HEK293 (cell line): ENCODE measurements at regions of chr17 and their contacts with region 1.

Region 1: DNA sequence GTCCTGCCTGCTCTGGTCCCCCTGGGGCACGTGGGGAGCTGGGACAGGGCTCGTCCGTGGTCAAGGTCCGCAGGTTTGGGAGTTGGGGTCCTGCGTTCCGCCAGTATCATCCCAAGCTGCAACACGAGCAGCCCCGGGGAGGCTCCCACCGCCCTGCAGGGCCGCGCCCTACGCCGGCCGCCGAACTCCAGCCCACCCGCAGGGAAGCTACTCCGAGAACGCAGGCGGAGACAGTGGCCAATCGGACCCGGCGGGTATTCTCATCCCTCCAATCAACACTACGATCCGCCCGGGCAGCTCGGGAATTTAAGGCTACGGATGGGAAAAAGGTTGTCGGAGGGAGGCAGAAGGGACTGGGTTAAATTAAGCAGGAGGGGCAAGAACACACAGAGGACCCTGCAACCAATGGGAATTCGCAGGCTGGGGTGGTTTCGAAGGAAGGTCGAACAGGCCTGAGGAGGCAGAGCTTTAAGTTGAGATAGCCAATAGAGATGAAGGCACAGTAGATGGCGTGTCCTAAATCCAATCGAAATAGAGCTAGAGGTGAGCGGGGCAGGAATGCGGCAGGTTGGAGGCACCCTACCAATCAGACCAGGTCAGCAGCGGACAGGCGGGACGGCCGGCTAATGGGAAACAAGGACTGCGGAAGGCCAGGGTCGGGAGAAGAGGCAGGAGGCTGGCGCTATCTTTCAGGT is 626 bp downstream of the SPAG7 start:
- H3K4me3 ChIP-seq: peak overlapping the region; percentile 70
- H3K27ac ChIP-seq: peak overlapping the region; percentile 97
- H3K4me1 ChIP-seq: peaks cover 15% of the 10 kb centered on the region
- CTCF ChIP-seq: no peak

Region 2: DNA sequence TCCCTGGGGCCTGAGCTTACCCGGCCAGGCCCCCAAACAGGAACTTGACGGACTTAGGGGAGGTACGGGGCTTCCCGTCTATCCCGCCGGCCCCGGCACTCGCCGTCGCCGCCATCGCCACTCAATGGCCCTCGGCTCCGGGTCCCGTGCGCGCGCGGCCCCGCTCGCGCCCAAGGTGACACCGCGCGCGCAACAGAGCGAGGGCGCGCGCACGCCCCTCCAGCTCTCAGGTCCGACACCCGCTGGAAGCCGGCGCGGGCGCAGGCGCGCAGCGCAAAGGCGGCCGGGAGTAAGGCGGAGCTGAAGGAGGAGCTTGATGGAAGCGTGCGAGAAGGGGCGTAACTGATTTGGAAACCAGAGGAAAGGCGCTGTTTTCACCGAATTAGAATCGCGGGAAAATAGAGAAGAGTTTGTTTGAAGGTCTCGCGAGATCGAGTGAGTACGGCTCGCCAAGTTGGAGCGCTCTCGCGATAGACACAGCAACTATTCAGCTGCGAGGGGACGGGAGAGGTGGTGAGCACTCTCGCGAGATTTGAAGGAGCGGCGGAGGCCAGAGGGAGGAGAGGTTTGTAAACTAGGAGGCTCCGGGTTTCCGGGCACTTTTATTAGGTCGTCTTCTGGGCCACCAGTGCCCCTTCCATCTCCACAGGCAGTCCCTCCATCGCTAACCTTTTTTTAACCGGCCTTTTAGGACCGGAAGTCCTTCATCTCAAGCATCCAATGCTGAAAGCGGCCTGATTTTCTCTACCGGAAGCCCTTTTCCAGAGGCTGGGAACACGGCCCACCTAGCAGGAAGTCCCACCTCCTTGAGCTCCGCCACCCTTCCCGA is 27.0 kb before region 1 on chr17 and contains the starts of genes RNF167 and SLC25A11:
- CTCF ChIA-PET with region 1: interaction called, 5 read pairs
- POLR2A ChIA-PET with region 1: interaction called, 358 read pairs
- H3K4me3 ChIP-seq: peak within 1 kb of the TSS; percentile 87
- H3K27ac ChIP-seq: peak within 1 kb of the TSS; percentile 93
- H3K4me1 ChIP-seq: peaks cover 9% of the 10 kb centered on the region
- CTCF ChIP-seq: no peak

Region 3: DNA sequence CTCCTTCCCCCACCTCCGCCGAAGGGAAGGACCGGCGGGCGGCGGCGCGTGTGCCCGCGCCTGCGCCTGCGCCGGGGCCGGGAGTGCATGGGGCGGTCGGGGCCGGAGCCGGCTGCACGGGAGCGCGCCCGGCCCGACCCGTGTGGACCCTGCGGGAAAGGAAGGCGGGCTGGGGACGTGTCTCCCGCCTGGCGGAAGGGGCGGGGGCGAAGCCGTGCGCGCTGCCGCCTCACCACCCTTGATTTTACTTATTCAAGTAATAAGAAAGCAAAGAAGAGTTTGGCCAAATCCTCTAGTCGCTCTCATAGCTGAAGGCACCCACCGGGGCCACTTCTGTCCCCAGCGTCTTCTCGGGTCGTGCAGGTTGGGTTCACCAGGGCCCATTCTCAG is 18.1 kb before region 1 on chr17:
- CTCF ChIA-PET with region 1: interaction called, 3 read pairs
- POLR2A ChIA-PET with region 1: interaction called, 358 read pairs
- H3K4me3 ChIP-seq: peak overlapping the region; percentile 97
- H3K27ac ChIP-seq: peak overlapping the region; percentile 99
- H3K4me1 ChIP-seq: peaks cover 21% of the 10 kb centered on the region
- CTCF ChIP-seq: no peak

Region 4: DNA sequence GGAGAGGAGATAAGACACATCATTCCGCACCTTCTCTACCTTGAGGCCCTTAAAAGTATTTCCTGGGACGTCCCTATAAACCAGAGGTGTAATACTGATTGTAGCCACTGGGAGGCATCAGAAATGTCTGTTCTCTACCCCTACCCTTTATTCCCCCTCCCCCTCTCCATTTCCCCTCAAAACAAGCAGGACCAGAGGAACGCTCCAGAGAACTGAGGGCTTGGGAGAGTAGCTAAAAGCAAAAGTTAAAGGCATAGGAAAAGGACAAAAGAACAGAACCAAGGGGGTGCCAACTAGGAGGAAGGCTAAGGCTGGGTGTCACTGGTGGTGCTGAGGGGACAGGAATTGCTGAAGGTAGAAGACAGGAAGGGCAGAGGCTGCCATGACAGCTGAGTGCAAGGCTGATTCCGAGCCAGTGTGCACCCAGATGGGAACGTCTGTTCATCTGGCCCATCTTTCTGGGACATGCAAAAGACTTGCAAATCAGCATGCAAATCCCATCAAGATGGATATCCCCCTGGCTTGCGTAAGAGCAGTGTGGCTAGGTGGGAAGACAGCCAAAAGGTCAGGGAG is 13.7 kb after region 1 on chr17:
- CTCF ChIA-PET with region 1: interaction called, 10 read pairs
- POLR2A ChIA-PET with region 1: interaction called, 9 read pairs
- H3K4me3 ChIP-seq: no peak overlapping the region
- H3K27ac ChIP-seq: no peak overlapping the region
- H3K4me1 ChIP-seq: no peaks in the 10 kb centered on the region
- CTCF ChIP-seq: peak; percentile 52

Region 5: GRCh38 chr17:4986951-4987766 is 20.2 kb after region 1 on chr17 and contains the start of gene CAMTA2:
- CTCF ChIA-PET with region 1: interaction called, 19 read pairs
- POLR2A ChIA-PET with region 1: interaction called, 40 read pairs
- H3K4me3 ChIP-seq: peak within 1 kb of the TSS; percentile 78
- H3K27ac ChIP-seq: peak within 1 kb of the TSS; percentile 92
- H3K4me1 ChIP-seq: peaks cover 11% of the 10 kb centered on the region
- CTCF ChIP-seq: peak; percentile 99